Activated B cell treated with CpG ODN at 0.5 μM for 24 hours (primary cell): ENCODE measurements at regions of chr1 and their contacts with region 1.

Region 1: DNA sequence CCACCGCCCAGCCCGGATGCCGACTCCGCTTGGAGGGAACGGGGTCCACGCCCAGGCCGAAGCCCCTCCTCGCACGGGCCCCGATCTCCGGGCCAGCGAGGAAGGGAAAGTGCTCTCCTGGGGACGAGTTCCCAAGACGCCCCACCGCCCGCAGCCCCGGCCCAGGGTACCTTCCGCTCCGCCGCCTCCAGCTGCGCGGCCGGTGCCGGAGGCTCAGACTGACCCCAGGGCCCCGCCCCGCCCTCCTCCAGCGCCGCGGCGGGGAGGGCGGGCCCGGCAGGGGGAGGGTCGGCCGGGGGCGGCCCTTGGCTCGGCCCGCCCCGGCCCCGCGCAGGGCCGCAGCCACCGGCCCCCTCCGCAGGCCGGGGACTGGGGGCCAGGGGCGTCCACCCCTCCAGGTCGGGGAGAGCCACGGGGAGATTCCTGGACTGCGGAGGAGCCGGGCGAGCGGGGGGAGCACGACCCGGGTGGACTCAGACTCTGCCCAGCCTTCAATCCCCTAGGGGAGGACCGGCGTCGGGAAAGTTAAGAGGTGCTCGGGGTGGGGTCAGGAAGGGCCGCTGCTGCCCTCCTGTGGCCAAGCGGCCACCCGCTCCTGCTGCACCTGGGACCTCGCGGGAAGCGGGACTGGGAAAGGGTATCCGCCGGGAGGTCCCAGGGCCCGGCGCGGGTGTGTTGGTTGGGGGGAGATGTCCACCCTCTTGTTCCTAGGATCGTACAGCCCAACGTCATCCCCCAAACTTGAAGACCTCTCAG is at the start of gene RHOC:
- DNase-seq: peak; percentile 74
- ATAC-seq: peak; percentile 86
- H3K4me3 Mint-ChIP-seq: peak within 1 kb of the TSS; percentile 82
- H3K27ac Mint-ChIP-seq: no peak within 1 kb of the TSS
- H3K4me1 Mint-ChIP-seq: peaks cover 47% of the 10 kb centered on the region
- H3K27me3 Mint-ChIP-seq: no peaks in the 10 kb centered on the region
- CTCF ChIP-seq: no peak
- total RNA-seq, gene RHOC: 11.5 and 13.5 TPM in 2 replicates

Region 2: GRCh38 chr1:112651205-112651604 is 55.9 kb before region 1 on chr1:
- CTCF ChIA-PET with region 1: no interaction called
- POLR2A ChIA-PET with region 1: no interaction called
- intact Hi-C with region 1: loop called (anchors 10 kb)
- DNase-seq: no peak
- ATAC-seq: no peak
- H3K4me3 Mint-ChIP-seq: no peak overlapping the region
- H3K27ac Mint-ChIP-seq: peak overlapping the region; percentile 2
- H3K4me1 Mint-ChIP-seq: peaks cover 12% of the 10 kb centered on the region
- H3K27me3 Mint-ChIP-seq: no peaks in the 10 kb centered on the region
- CTCF ChIP-seq: no peak